ENCODE measurements at regions of chr12 and their contacts with region 1.

Region 1: GRCh38 chr12:15220994-15221885 is at the start of gene RERG:
- DNase-seq: peak; percentile 42 to 74 (median 70)
- H3K4me3 ChIP-seq: peak within 1 kb of the TSS in 1 of 2 donors; percentile 27
- H3K4me3 Mint-ChIP-seq: peak within 1 kb of the TSS; percentile 60 to 83 (median 74)
- H3K27ac ChIP-seq: no peak within 1 kb of the TSS
- H3K27ac Mint-ChIP-seq: no peak within 1 kb of the TSS
- H3K4me1 ChIP-seq: peaks cover 10% of the 10 kb centered on the region
- H3K4me1 Mint-ChIP-seq: peaks cover 2 to 14% (median 8%) of the 10 kb centered on the region in 4 donors
- H3K27me3 ChIP-seq: peaks cover 6% of the 10 kb centered on the region
- H3K27me3 Mint-ChIP-seq: peaks cover 21 to 28% of the 10 kb centered on the region in 2 donors
- total RNA-seq, gene RERG: not detected

Region 2: DNA sequence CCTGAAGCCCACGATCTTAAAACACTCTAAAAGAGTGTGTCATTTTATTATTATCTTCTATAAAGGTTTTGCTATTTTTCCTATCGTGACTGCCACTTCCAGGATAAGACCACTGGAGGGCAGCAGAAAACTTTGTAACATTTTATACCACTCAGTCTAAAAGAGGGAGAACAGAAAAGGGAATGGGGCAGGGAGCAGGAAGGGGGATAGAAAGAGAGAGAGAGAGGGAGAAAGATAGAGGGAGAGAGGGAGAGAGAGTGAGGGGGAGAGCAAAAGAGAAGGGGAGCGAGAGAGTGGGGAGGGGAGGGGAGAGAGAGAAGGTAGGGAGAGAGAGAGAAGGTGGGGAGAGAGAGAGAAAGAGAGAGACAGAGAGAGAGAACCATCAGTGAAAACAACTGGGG is 375.9 kb before region 1 on chr12:
- CTCF ChIA-PET with region 1: interaction called, 33 read pairs
- POLR2A ChIA-PET with region 1: no interaction called
- intact Hi-C with region 1: loop called (anchors 1 kb)
- DNase-seq: peak in 4 of 5 donors; percentile 50 to 59 (median 56)
- H3K4me3 ChIP-seq: no peak overlapping the region
- H3K4me3 Mint-ChIP-seq: peak overlapping the region in 1 of 8 donors; percentile 11
- H3K27ac ChIP-seq: no peak overlapping the region
- H3K27ac Mint-ChIP-seq: no peak overlapping the region
- H3K4me1 ChIP-seq: peaks cover 3% of the 10 kb centered on the region
- H3K4me1 Mint-ChIP-seq: peaks cover 0 to 5% (median 1%) of the 10 kb centered on the region in 4 donors
- H3K27me3 ChIP-seq: no peaks in the 10 kb centered on the region
- H3K27me3 Mint-ChIP-seq: no peaks in the 10 kb centered on the region

Region 3: DNA sequence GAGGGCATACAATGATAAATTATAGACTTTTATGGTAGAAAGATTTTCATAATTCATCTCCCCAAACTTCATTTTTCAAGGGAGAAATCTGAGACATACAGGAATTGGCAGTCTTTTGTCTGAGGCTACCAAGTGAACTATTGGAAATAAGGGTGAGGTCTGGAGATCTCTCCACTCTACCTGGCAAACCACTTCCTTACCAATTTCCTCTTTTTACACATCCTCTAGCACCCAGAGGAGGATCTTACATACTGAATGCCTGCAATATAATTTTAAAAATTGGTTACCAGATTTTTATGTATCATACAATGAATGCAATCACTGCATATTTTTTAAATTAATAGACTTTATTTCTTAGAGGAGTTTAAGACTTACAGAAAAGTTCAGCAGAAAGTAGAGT is 241.8 kb before region 1 on chr12:
- CTCF ChIA-PET with region 1: no interaction called
- POLR2A ChIA-PET with region 1: no interaction called
- intact Hi-C with region 1: no loop called
- DNase-seq: no peak
- H3K4me3 ChIP-seq: no peak overlapping the region
- H3K4me3 Mint-ChIP-seq: peak overlapping the region in 6 of 8 donors; percentile 4 to 72 (median 28)
- H3K27ac ChIP-seq: no peak overlapping the region
- H3K27ac Mint-ChIP-seq: peak overlapping the region in 4 of 7 donors; percentile 2 to 45 (median 27)
- H3K4me1 ChIP-seq: peaks cover 32% of the 10 kb centered on the region
- H3K4me1 Mint-ChIP-seq: peaks cover 35 to 52% (median 42%) of the 10 kb centered on the region in 4 donors
- H3K27me3 ChIP-seq: no peaks in the 10 kb centered on the region
- H3K27me3 Mint-ChIP-seq: no peaks in the 10 kb centered on the region

Region 4: GRCh38 chr12:15011162-15011561 is 210.1 kb before region 1 on chr12:
- CTCF ChIA-PET with region 1: interaction called, 3 read pairs
- POLR2A ChIA-PET with region 1: no interaction called
- intact Hi-C with region 1: loop called (anchors 5 kb)
- DNase-seq: no peak
- H3K4me3 ChIP-seq: no peak overlapping the region
- H3K4me3 Mint-ChIP-seq: no peak overlapping the region
- H3K27ac ChIP-seq: no peak overlapping the region
- H3K27ac Mint-ChIP-seq: no peak overlapping the region
- H3K4me1 ChIP-seq: no peaks in the 10 kb centered on the region
- H3K4me1 Mint-ChIP-seq: no peaks in the 10 kb centered on the region
- H3K27me3 ChIP-seq: no peaks in the 10 kb centered on the region
- H3K27me3 Mint-ChIP-seq: peaks cover 17 to 22% of the 10 kb centered on the region in 2 donors

Region 5: DNA sequence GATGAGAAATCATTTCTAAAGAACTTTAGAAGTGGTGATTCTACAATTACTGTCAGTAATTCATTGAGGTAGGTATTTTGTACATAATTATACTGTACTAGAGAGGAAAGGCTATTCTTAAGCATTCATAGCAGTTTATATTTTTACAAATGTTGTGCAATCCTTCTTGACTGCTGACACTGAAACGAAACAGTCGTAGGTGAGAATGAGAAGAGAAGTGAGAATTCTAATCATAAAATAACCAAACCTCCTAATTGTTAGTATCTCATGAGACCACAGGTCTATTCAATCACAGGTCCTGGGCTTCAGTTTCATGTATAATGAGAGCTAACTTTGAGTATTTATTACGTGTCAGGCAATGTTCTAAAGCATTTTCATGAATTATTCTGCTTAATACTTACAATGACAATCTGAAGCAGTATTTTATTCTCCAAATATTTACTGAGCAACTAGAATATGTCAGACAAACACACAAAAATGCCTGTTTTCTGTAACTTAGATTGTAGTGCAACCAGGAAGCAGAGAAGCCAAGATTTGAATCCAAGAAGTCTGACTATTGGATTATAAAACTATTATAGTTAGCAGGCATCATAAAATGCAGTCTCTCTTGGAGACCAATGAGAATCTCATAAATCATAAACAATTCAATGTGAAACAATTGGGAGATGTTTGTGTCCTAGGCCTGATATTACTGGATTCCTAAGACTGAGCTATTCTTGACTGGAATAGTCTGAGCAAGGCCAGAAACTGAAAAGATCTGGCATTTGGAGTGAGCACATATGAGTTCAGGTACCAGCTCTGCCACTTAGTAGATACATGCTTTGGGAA is 24.3 kb before region 1 on chr12:
- CTCF ChIA-PET with region 1: interaction called, 14 read pairs
- POLR2A ChIA-PET with region 1: no interaction called
- intact Hi-C with region 1: no loop called
- DNase-seq: no peak
- H3K4me3 ChIP-seq: no peak overlapping the region
- H3K4me3 Mint-ChIP-seq: no peak overlapping the region
- H3K27ac ChIP-seq: no peak overlapping the region
- H3K27ac Mint-ChIP-seq: no peak overlapping the region
- H3K4me1 ChIP-seq: no peaks in the 10 kb centered on the region
- H3K4me1 Mint-ChIP-seq: no peaks in the 10 kb centered on the region
- H3K27me3 ChIP-seq: no peaks in the 10 kb centered on the region
- H3K27me3 Mint-ChIP-seq: peaks cover 2 to 4% of the 10 kb centered on the region in 2 donors

Measured in CD4-positive, alpha-beta memory T cell (primary cell).